B cell (primary cell): ENCODE measurements at regions of chr12 and their contacts with region 1.

Region 1: GRCh38 chr12:69359531-69360347 is at the start of gene YEATS4:
- DNase-seq: peak; percentile 93
- ATAC-seq: peak; percentile 83
- H3K4me3 ChIP-seq: peak within 1 kb of the TSS; percentile 61 to 99 (median 90)
- H3K4me3 Mint-ChIP-seq: peak within 1 kb of the TSS; percentile 88
- H3K27ac ChIP-seq: peak within 1 kb of the TSS; percentile 93 to 96
- H3K27ac Mint-ChIP-seq: peak within 1 kb of the TSS; percentile 95
- H3K4me1 ChIP-seq: peaks cover 10 to 21% of the 10 kb centered on the region in 2 donors
- H3K4me1 Mint-ChIP-seq: peaks cover 17% of the 10 kb centered on the region
- H3K27me3 ChIP-seq: no peaks in the 10 kb centered on the region
- H3K27me3 Mint-ChIP-seq: no peaks in the 10 kb centered on the region
- CTCF ChIP-seq: no peak
- total RNA-seq, gene YEATS4: 15.2 and 18.0 TPM in 2 replicates

Region 2: DNA sequence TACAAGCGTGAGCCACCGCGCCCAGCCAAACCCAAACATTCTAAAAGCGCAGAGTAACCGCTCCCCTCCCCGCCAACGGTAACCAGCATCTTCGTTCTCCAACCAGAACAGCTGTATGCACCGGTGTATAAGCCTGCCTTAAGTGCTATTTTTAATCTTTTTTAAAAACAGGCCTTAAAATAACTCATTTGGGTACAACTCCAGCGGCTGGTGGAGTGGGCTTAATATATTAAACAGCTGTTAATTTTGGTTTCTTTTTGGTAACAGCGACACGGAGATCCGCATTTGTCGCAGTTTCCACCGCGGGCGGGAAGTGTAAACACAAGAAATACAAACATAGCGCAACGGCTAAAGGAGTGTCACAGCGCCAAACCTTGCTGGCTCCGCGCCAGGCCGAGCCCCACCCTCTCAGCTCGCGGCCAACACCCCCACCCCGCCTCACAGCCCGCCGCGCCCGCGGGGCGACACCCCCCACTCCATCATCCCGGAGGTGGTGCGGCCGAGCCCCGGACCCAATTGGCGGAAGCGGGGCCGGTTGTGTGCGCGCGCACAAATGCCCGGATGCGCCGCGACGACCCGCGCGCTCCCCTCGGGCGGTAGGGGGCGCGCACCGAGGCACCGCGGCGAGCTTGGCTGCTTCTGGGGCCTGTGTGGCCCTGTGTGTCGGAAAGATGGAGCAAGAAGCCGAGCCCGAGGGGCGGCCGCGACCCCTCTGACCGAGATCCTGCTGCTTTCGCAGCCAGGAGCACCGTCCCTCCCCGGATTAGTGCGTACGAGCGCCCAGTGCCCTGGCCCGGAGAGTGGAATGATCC is 552.0 kb before region 1 on chr12 and contains the start of gene MDM2:
- CTCF ChIA-PET with region 1: no interaction called
- POLR2A ChIA-PET with region 1: no interaction called
- intact Hi-C with region 1: loop called (anchors 10 kb)
- DNase-seq: peak; percentile 98
- ATAC-seq: peak; percentile 90
- H3K4me3 ChIP-seq: peak within 1 kb of the TSS; percentile 65 to 95 (median 84)
- H3K4me3 Mint-ChIP-seq: peak within 1 kb of the TSS; percentile 97
- H3K27ac ChIP-seq: peak within 1 kb of the TSS; percentile 92 to 95
- H3K27ac Mint-ChIP-seq: peak within 1 kb of the TSS; percentile 99
- H3K4me1 ChIP-seq: peaks cover 11% of the 10 kb centered on the region in 2 donors
- H3K4me1 Mint-ChIP-seq: peaks cover 17% of the 10 kb centered on the region
- H3K27me3 ChIP-seq: no peaks in the 10 kb centered on the region
- H3K27me3 Mint-ChIP-seq: no peaks in the 10 kb centered on the region
- CTCF ChIP-seq: peak; percentile 76
- total RNA-seq, gene MDM2: 78.7 and 87.0 TPM in 2 replicates

Region 3: GRCh38 chr12:69290545-69291277 is 69.0 kb before region 1 on chr12:
- CTCF ChIA-PET with region 1: interaction called, 38 read pairs
- POLR2A ChIA-PET with region 1: no interaction called
- intact Hi-C with region 1: loop called (anchors 2 kb)
- DNase-seq: peak; percentile 84
- ATAC-seq: peak; percentile 100
- H3K4me3 ChIP-seq: no peak overlapping the region
- H3K4me3 Mint-ChIP-seq: no peak overlapping the region
- H3K27ac ChIP-seq: no peak overlapping the region
- H3K27ac Mint-ChIP-seq: no peak overlapping the region
- H3K4me1 ChIP-seq: peaks cover 0 to 4% of the 10 kb centered on the region in 2 donors
- H3K4me1 Mint-ChIP-seq: peaks cover 4% of the 10 kb centered on the region
- H3K27me3 ChIP-seq: peaks cover 0 to 23% (median 13%) of the 10 kb centered on the region in 4 experiments
- H3K27me3 Mint-ChIP-seq: peaks cover 37% of the 10 kb centered on the region
- CTCF ChIP-seq: peak; percentile 96

Region 4: GRCh38 chr12:69341328-69341727 is 18.4 kb before region 1 on chr12:
- CTCF ChIA-PET with region 1: interaction called, 31 read pairs
- POLR2A ChIA-PET with region 1: no interaction called
- intact Hi-C with region 1: no loop called
- DNase-seq: no peak
- ATAC-seq: no peak
- H3K4me3 ChIP-seq: no peak overlapping the region
- H3K4me3 Mint-ChIP-seq: no peak overlapping the region
- H3K27ac ChIP-seq: no peak overlapping the region
- H3K27ac Mint-ChIP-seq: no peak overlapping the region
- H3K4me1 ChIP-seq: peaks cover 17 to 18% of the 10 kb centered on the region in 2 donors
- H3K4me1 Mint-ChIP-seq: peaks cover 18% of the 10 kb centered on the region
- H3K27me3 ChIP-seq: peaks cover 0 to 7% (median 0%) of the 10 kb centered on the region in 4 experiments
- H3K27me3 Mint-ChIP-seq: no peaks in the 10 kb centered on the region
- CTCF ChIP-seq: no peak

Region 5: DNA sequence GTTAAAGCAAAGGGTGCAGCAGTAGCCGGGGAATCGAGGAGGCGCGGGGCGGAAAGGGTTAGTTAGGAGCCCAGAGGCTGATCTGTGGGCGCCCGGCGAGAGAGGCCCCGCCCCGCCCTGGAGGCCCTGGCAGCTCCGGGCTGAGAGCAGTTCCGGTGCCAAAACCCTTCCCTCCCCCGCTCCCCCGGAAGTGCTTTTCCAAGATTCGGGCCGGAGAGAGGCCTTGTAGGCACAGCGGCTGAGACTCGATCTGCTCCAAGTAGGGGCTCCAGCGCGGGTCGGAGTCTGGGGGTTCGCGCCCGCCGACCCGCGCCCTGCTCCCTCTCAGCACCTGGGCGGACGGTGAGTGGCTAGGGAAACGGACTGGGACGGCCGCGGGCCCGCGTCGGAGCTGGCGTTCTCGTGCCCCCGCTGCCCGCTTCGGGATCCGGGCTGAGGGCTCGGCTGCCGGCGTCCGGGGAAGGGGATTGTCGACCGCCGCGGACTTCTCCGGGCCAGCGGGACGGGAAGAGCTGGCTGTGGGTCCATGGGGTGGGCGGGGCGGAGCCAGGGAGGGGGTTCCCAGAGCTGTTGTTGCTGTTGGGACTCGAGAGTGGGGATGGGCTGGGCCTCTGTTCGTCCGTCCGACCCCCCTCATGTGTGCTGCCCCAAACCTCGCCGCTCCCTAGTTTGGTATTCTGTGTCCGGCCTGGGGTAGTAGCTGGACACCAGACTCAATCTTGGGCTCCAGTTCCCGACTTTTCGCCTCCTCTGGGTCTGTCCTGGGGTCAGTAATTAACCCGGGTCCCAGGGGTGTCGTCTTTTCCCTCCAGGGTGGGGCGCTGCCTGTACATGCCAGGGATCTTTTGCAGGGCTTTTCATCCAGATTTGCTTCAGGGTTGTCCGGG is 110.7 kb after region 1 on chr12 and contains the start of gene FRS2:
- CTCF ChIA-PET with region 1: interaction called, 5 read pairs
- POLR2A ChIA-PET with region 1: no interaction called
- intact Hi-C with region 1: loop called (anchors 2 kb)
- DNase-seq: peak; percentile 84
- ATAC-seq: peak; percentile 94
- H3K4me3 ChIP-seq: peak within 1 kb of the TSS; percentile 48 to 99 (median 96)
- H3K4me3 Mint-ChIP-seq: peak within 1 kb of the TSS; percentile 98
- H3K27ac ChIP-seq: peak within 1 kb of the TSS; percentile 78 to 94
- H3K27ac Mint-ChIP-seq: peak within 1 kb of the TSS; percentile 97
- H3K4me1 ChIP-seq: peaks cover 44 to 56% of the 10 kb centered on the region in 2 donors
- H3K4me1 Mint-ChIP-seq: peaks cover 70% of the 10 kb centered on the region
- H3K27me3 ChIP-seq: no peaks in the 10 kb centered on the region
- H3K27me3 Mint-ChIP-seq: no peaks in the 10 kb centered on the region
- CTCF ChIP-seq: no peak
- total RNA-seq, gene FRS2: 29.5 and 33.7 TPM in 2 replicates

Region 6: DNA sequence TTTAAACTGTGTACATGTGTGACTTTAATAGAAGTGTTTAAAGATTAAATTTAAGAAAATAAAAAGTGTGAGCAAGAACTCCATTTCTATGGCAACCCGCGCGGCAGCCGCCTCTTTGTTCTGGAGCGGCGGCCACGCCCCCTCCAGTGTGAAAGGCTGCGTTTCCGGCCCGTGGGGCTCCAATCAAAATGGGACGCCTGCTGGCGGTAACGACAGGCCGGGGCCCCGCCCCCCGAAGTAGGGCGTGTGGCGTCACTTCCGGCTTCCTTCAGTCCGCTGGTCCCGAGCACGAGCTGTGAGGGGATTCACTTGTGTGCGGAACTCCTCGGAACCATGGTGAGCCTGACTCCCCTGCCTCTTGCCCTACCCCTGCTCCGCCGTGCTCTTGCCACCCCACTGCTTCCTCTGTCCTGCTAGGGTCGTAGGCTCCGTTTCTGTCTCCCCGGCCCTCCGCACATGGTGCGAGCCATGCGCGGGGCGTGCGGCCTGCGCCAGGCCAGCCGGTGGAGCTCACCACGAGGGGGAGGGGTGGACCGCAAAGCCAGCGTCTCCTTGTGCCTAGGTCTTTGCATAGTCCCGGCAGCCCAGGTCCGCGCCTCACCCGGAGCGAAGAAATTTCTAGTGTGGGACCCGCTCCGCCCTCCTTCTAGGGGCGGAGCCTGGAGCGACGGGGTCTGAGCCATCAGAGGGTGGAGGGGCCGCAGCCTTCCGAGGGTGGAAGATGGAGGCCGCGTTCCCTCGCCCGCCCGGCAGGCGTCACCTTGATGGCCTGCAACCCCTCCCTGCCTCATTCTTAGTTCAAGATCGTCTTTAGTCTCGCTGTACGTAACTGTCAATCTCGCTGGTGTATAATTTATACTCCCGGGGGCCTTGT is 225.7 kb after region 1 on chr12 and contains the start of gene CCT2:
- CTCF ChIA-PET with region 1: interaction called, 6 read pairs
- POLR2A ChIA-PET with region 1: no interaction called
- intact Hi-C with region 1: loop called (anchors 1 kb)
- DNase-seq: peak; percentile 98
- ATAC-seq: peak; percentile 93
- H3K4me3 ChIP-seq: peak within 1 kb of the TSS; percentile 83 to 96 (median 90)
- H3K4me3 Mint-ChIP-seq: peak within 1 kb of the TSS; percentile 97
- H3K27ac ChIP-seq: peak within 1 kb of the TSS; percentile 91 to 97
- H3K27ac Mint-ChIP-seq: peak within 1 kb of the TSS; percentile 96
- H3K4me1 ChIP-seq: peaks cover 6 to 11% of the 10 kb centered on the region in 2 donors
- H3K4me1 Mint-ChIP-seq: peaks cover 12% of the 10 kb centered on the region
- H3K27me3 ChIP-seq: no peaks in the 10 kb centered on the region
- H3K27me3 Mint-ChIP-seq: no peaks in the 10 kb centered on the region
- CTCF ChIP-seq: peak; percentile 60
- total RNA-seq, gene CCT2: 125 TPM in 2 replicates

Region 7: DNA sequence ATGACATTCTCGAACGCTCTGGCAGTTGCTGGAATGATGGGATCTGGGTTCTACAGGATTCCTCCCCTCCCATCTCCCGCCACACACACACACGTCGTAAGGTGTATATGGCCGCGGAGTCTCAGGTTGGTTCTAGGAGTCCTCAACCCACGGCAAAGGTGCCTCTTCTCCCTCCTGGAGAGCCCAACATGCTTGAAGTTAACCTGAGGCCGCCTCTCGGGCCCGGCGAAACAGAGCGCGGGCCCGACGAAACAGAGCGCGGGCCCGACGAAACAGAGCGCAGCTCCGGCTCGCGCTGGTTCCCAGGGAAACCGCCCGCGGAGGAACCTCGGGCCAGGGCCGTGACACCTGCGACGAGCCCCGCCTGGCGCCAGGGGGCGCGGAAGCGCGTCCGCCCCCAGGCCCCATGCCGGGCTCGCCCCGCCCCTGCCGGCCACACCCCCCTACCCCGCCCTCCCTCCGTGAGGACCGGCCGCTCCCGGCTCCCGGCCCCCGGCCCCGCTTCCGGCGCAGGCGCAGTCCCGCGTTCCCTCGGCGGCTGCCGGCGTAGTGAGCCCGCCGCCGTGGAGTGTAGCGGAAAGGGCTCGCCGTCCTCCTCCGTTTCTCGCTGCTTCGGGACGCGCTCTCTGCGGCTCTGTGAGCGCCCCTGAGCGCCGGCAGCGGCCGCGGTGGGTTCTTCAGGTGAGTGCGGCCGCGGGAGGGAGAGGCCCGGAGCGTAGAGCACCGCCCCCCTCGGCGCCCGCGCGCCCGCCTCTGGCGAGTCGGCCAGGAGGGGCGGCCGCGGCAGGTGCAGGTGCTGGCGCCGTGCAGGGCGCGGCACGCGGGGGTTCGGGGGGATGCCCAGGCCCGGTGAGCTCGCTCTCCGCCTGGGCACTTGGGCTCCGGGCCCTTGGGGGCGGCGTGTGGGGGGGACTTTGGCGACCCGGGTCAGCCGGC is 378.9 kb after region 1 on chr12 and contains the start of gene RAB3IP:
- CTCF ChIA-PET with region 1: no interaction called
- POLR2A ChIA-PET with region 1: no interaction called
- intact Hi-C with region 1: loop called (anchors 1 kb)
- DNase-seq: peak; percentile 94
- ATAC-seq: peak; percentile 93
- H3K4me3 ChIP-seq: peak within 1 kb of the TSS; percentile 63 to 77 (median 70)
- H3K4me3 Mint-ChIP-seq: peak within 1 kb of the TSS; percentile 87
- H3K27ac ChIP-seq: peak within 1 kb of the TSS; percentile 57 to 91
- H3K27ac Mint-ChIP-seq: peak within 1 kb of the TSS; percentile 76
- H3K4me1 ChIP-seq: peaks cover 11 to 15% of the 10 kb centered on the region in 2 donors
- H3K4me1 Mint-ChIP-seq: peaks cover 11% of the 10 kb centered on the region
- H3K27me3 ChIP-seq: peaks cover 0 to 6% (median 0%) of the 10 kb centered on the region in 4 experiments
- H3K27me3 Mint-ChIP-seq: peaks cover 12% of the 10 kb centered on the region
- CTCF ChIP-seq: peak; percentile 79
- total RNA-seq, gene RAB3IP: 37.9 and 38.4 TPM in 2 replicates